ENCODE measurements at regions of chr4 and their contacts with region 1.

Region 1: GRCh38 chr4:163527172-163527571 is 32.7 kb downstream of the TMA16 start:
- DNase-seq: no peak

Region 2: GRCh38 chr4:162707962-162708361 is 819.2 kb before region 1 on chr4:
- intact Hi-C with region 1: loop called in 1 of 2 experiments (anchors 5 kb)
- DNase-seq: no peak

Region 3: DNA sequence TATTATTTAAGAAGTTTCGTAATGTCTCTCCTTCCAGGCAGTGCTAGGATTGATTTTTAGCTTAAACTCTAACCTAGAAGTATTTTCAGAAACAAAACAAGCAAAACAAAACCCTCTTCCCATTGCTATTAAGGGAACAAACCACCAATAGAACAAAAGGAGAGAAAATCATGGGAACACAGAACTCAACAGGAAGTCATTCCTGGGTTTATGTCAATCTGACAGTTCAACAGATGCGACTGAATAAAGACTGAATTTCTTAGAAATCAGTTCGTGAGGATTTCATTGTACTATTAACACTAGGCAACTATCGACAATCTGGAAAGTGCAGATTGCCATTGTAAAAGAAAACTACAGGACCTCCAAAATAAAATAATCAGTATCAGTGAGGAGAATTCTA is 997.6 kb after region 1 on chr4:
- intact Hi-C with region 1: loop called in 1 of 2 experiments (anchors 5 kb)
- DNase-seq: no peak

Measured in posterior vena cava (tissue), 2 donors.